ENCODE measurements at regions of chr7 and their contacts with region 1.

Region 1: GRCh38 chr7:43834463-43835251 is 34.7 kb downstream of the MRPS24 start:
- DNase-seq: peak; percentile 59 to 68 (median 64)
- H3K4me3 ChIP-seq: peak overlapping the region; percentile 45 to 58
- H3K4me3 Mint-ChIP-seq: peak overlapping the region; percentile 89 to 98 (median 96)
- H3K27ac ChIP-seq: peak overlapping the region; percentile 60
- H3K27ac Mint-ChIP-seq: peak overlapping the region; percentile 85 to 99 (median 96)
- H3K4me1 ChIP-seq: peaks cover 14% of the 10 kb centered on the region
- H3K4me1 Mint-ChIP-seq: peaks cover 16 to 25% (median 21%) of the 10 kb centered on the region in 4 donors
- H3K27me3 ChIP-seq: no peaks in the 10 kb centered on the region
- H3K27me3 Mint-ChIP-seq: no peaks in the 10 kb centered on the region

Region 2: DNA sequence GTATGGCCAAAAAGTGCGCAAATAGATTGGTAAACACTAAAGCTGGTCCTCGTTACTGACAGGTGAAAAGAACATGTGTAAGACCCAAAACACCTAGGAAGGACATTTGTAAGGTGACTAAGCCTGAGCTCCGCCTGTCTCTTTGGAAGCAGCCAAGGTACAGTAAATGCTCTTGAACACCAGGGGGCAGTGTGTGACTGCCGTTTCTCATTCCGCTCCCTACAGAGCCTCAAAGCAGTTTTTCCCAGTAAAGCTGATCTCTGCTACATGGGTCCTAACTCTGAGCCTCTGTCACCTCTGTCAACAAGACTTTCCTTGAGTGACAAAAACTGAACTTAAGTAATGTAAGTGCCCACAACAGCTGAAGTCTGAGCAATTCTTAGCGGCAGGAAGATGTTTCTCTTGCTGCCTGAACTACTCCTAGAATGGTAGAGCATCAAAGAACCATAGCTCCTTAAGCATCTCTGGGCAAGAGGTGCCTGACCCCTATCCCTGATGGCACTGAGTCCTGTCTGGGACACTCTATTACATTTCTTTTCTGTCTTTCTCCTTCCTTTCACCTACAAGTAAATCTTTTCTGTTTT is 1893.8 kb before region 1 on chr7:
- CTCF ChIA-PET with region 1: interaction called, 19 read pairs
- POLR2A ChIA-PET with region 1: no interaction called
- intact Hi-C with region 1: loop called (anchors 1 kb)
- DNase-seq: peak in 4 of 5 donors; percentile 34 to 41 (median 37)
- H3K4me3 ChIP-seq: no peak overlapping the region
- H3K4me3 Mint-ChIP-seq: no peak overlapping the region
- H3K27ac ChIP-seq: no peak overlapping the region
- H3K27ac Mint-ChIP-seq: no peak overlapping the region
- H3K4me1 ChIP-seq: no peaks in the 10 kb centered on the region
- H3K4me1 Mint-ChIP-seq: peaks cover 6 to 17% (median 13%) of the 10 kb centered on the region in 4 donors
- H3K27me3 ChIP-seq: no peaks in the 10 kb centered on the region
- H3K27me3 Mint-ChIP-seq: peaks cover 14 to 18% of the 10 kb centered on the region in 2 donors

Region 3: GRCh38 chr7:42940985-42941847 is 893.4 kb before region 1 on chr7:
- CTCF ChIA-PET with region 1: interaction called, 10 read pairs
- POLR2A ChIA-PET with region 1: no interaction called
- intact Hi-C with region 1: loop called (anchors 1 kb)
- DNase-seq: peak; percentile 52 to 66 (median 56)
- H3K4me3 ChIP-seq: no peak overlapping the region
- H3K4me3 Mint-ChIP-seq: no peak overlapping the region
- H3K27ac ChIP-seq: no peak overlapping the region
- H3K27ac Mint-ChIP-seq: no peak overlapping the region
- H3K4me1 ChIP-seq: no peaks in the 10 kb centered on the region
- H3K4me1 Mint-ChIP-seq: peaks cover 8 to 25% (median 15%) of the 10 kb centered on the region in 4 donors
- H3K27me3 ChIP-seq: no peaks in the 10 kb centered on the region
- H3K27me3 Mint-ChIP-seq: no peaks in the 10 kb centered on the region

Region 4: DNA sequence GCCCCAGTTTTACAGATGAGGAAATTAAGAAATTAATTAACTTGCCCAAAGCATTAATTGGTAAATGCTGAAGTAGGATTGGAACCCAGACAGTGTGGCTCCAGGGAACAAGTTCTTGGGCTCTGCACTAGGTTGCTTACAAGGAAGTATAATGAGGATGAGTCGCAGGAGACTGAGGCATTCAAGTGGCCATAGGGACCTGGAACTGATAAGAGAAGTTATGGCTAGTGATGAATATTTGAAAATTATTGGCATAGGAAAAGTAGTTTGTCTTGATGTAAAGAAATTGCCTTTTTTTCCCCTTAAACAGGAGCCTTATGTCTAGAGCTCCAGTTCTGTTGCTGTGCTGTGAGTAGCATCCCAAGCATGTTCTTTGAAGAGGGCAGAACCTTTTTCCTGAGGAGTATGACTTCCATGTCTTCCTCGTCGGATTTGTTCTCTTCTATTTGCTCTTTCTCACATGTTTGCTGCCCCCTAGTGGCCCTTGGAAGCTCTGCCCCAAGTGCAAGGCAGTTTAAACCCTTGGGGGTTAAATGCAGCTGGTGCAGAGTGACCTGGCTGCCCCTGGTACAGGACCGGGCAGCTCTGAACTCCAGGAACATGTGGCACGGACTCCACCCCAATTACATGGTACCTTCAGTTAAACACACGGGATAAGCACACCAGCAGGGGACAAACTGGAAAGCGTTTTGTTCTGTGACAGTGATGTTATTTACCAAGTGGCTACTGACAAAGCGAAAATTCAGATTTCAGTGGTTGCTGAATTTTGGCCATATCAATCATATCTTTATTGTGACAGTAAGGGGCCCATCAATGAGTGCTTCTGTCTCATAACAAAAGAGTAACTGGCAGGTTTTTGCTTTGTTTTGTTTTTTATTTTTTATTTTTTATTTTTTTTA is 573.4 kb before region 1 on chr7:
- CTCF ChIA-PET with region 1: interaction called, 3 read pairs
- POLR2A ChIA-PET with region 1: no interaction called
- intact Hi-C with region 1: loop called (anchors 5 kb)
- DNase-seq: peak; percentile 28 to 54 (median 36)
- H3K4me3 ChIP-seq: no peak overlapping the region
- H3K4me3 Mint-ChIP-seq: no peak overlapping the region
- H3K27ac ChIP-seq: no peak overlapping the region
- H3K27ac Mint-ChIP-seq: no peak overlapping the region
- H3K4me1 ChIP-seq: no peaks in the 10 kb centered on the region
- H3K4me1 Mint-ChIP-seq: no peaks in the 10 kb centered on the region
- H3K27me3 ChIP-seq: no peaks in the 10 kb centered on the region
- H3K27me3 Mint-ChIP-seq: peaks cover 4 to 8% of the 10 kb centered on the region in 2 donors

Region 5: GRCh38 chr7:43721193-43721806 is 113.4 kb before region 1 on chr7:
- CTCF ChIA-PET with region 1: interaction called, 20 read pairs
- POLR2A ChIA-PET with region 1: no interaction called
- intact Hi-C with region 1: loop called (anchors 2 kb)
- DNase-seq: peak in 4 of 5 donors; percentile 54 to 59 (median 58)
- H3K4me3 ChIP-seq: no peak overlapping the region
- H3K4me3 Mint-ChIP-seq: no peak overlapping the region
- H3K27ac ChIP-seq: no peak overlapping the region
- H3K27ac Mint-ChIP-seq: peak overlapping the region in 3 of 7 donors; percentile 14 to 71 (median 47)
- H3K4me1 ChIP-seq: no peaks in the 10 kb centered on the region
- H3K4me1 Mint-ChIP-seq: peaks cover 23 to 46% (median 34%) of the 10 kb centered on the region in 4 donors
- H3K27me3 ChIP-seq: no peaks in the 10 kb centered on the region
- H3K27me3 Mint-ChIP-seq: no peaks in the 10 kb centered on the region

Region 6: DNA sequence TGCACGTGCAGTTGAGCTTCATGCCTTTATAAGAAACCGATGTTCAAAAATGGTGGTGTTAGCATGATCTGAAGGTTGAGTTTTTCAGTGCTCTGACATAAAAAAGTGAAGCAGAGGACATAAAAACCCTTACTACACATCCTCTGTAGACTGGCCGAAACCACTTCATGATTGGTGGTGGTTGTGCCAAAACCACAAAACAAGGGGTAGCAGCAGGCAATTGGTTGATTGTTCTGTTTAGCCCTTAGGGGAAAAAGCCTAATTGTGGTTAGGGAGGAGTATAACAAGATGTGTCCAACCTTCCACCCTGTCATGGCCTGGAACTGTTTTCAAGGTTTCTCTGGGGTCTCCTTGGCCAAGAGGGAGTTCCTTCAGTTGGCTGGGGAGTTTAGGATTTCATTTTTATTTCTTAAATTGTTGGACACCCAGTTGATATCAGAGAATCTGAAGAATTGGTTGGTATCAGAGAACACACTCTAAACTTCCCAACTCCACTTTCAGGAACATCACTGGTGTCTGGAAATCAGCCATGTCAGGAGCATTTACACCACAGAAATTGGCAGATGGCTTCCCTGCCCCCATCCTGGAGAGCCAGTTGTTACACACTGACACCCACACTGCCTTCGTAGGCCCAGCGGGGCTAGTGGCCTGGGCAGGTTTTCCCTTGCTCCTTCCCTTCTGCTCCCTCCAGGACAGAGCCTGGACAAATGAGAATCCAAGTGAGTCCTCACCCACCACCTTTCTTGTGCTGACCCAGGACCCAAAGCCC is 15.9 kb after region 1 on chr7:
- CTCF ChIA-PET with region 1: interaction called, 12 read pairs
- POLR2A ChIA-PET with region 1: interaction called, 3 read pairs
- intact Hi-C with region 1: no loop called
- DNase-seq: no peak
- H3K4me3 ChIP-seq: no peak overlapping the region
- H3K4me3 Mint-ChIP-seq: no peak overlapping the region
- H3K27ac ChIP-seq: no peak overlapping the region
- H3K27ac Mint-ChIP-seq: no peak overlapping the region
- H3K4me1 ChIP-seq: no peaks in the 10 kb centered on the region
- H3K4me1 Mint-ChIP-seq: peaks cover 0 to 4% (median 0%) of the 10 kb centered on the region in 4 donors
- H3K27me3 ChIP-seq: no peaks in the 10 kb centered on the region
- H3K27me3 Mint-ChIP-seq: peaks cover 2 to 3% of the 10 kb centered on the region in 2 donors

Region 7: DNA sequence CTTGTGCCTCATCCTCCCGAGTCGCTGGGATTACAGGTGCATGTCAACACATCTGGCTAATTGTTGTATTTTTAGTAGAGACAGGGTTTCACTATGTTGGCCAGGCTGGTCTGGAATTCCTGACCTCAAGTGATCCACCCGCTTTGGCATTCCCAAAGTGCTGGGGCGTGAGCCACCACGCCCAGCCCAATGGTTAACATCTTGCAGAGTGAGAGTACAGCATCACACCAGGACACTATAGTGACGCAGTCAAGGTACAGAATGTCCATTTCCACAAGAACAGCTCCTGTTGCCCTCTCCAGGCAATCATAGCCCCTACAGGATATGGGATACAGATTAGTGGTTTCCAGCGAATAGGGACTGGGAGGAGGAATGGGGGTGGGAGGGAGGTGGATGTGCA is 1110.2 kb after region 1 on chr7:
- CTCF ChIA-PET with region 1: no interaction called
- POLR2A ChIA-PET with region 1: no interaction called
- intact Hi-C with region 1: no loop called
- DNase-seq: no peak
- H3K4me3 ChIP-seq: no peak overlapping the region
- H3K4me3 Mint-ChIP-seq: no peak overlapping the region
- H3K27ac ChIP-seq: no peak overlapping the region
- H3K27ac Mint-ChIP-seq: no peak overlapping the region
- H3K4me1 ChIP-seq: no peaks in the 10 kb centered on the region
- H3K4me1 Mint-ChIP-seq: no peaks in the 10 kb centered on the region
- H3K27me3 ChIP-seq: no peaks in the 10 kb centered on the region
- H3K27me3 Mint-ChIP-seq: peaks cover 2 to 3% of the 10 kb centered on the region in 2 donors

Measured in CD4-positive, alpha-beta memory T cell (primary cell).